Posterior cingulate gyrus (tissue), 11 donors: ENCODE measurements at regions of chr17 and their contacts with region 1.

Region 1: GRCh38 chr17:13353590-13353989 is 248.1 kb downstream of the HS3ST3A1 start:
- DNase-seq: no peak

Region 2: GRCh38 chr17:13311301-13311700 is 42.3 kb before region 1 on chr17:
- intact Hi-C with region 1: loop called (anchors 5 kb)
- DNase-seq: no peak